A549 (cell line): ENCODE measurements at regions of chr7 and their contacts with region 1.

Region 1: GRCh38 chr7:158885624-158886023 is 29.3 kb downstream of the DYNC2I1 start:
- DNase-seq: peak; percentile 41 to 54
- ATAC-seq: peak in 1 of 2 experiments; percentile 55; a peak in 2 of 6 replicates
- H3K4me3 ChIP-seq: no peak overlapping the region
- H3K27ac ChIP-seq: no peak overlapping the region
- H3K4me1 ChIP-seq: no peaks in the 10 kb centered on the region
- CTCF ChIP-seq: peak; percentile 65
- EP300 ChIP-seq: no peak
- POLR2A ChIP-seq: no peak
- RAD21 ChIP-seq: peak; percentile 71 to 77

Region 2: DNA sequence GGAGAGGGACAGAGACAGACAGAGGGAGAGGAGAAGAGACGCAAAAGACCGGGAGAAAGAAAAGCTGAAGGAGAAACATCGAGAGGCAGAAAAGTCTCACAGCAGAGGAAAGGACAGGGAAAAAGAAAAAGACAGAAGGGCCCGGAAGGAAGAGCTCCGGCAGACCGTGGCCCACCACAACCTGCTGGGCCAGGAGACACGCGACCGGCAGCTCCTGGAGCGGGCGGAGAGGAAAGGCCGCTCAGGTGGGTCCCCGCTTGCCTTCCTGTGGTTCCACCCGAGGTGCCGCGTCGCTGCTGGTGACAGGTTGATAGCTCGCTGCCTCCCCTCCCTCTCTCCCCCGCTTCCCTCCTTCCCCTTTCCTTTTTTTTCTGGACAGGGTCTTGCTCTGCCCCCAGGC is 14.3 kb before region 1 on chr7:
- CTCF ChIA-PET with region 1: interaction called, 10 read pairs
- POLR2A ChIA-PET with region 1: no interaction called
- DNase-seq: no peak
- ATAC-seq: no peak
- H3K4me3 ChIP-seq: no peak overlapping the region
- H3K27ac ChIP-seq: no peak overlapping the region
- H3K4me1 ChIP-seq: no peaks in the 10 kb centered on the region
- CTCF ChIP-seq: no peak
- EP300 ChIP-seq: no peak
- POLR2A ChIP-seq: no peak
- RAD21 ChIP-seq: no peak

Region 3: DNA sequence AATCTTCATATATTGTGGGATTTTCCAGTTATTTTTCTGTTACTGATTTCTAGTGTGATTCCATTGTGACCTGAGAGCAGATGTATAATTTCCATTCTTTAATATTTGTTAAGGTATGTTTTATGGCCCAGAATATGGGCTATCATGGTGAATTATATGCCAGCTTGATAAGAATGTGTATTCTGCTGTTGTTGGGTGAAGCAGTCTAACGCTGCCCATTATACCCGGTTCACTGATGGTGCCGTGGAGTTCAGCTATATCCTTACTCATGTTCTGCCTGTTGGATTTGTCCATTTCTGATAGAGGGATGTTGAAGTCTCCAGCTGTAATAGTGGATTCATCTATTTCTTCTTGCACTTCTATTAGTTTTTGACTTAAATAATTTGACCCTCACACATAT is 12.4 kb after region 1 on chr7:
- CTCF ChIA-PET with region 1: no interaction called
- POLR2A ChIA-PET with region 1: no interaction called
- DNase-seq: no peak
- ATAC-seq: no peak
- H3K4me3 ChIP-seq: no peak overlapping the region
- H3K27ac ChIP-seq: no peak overlapping the region
- H3K4me1 ChIP-seq: no peaks in the 10 kb centered on the region
- CTCF ChIP-seq: no peak
- EP300 ChIP-seq: no peak
- POLR2A ChIP-seq: no peak
- RAD21 ChIP-seq: no peak

Region 4: GRCh38 chr7:158924956-158925355 is 39.3 kb after region 1 on chr7:
- CTCF ChIA-PET with region 1: no interaction called
- POLR2A ChIA-PET with region 1: no interaction called
- DNase-seq: no peak
- ATAC-seq: no peak
- H3K4me3 ChIP-seq: no peak overlapping the region
- H3K27ac ChIP-seq: no peak overlapping the region
- H3K4me1 ChIP-seq: no peaks in the 10 kb centered on the region
- CTCF ChIP-seq: no peak
- EP300 ChIP-seq: no peak
- POLR2A ChIP-seq: no peak
- RAD21 ChIP-seq: no peak